OCI-LY7 (cell line): ENCODE measurements at regions of chr4 and their contacts with region 1.

Region 1: DNA sequence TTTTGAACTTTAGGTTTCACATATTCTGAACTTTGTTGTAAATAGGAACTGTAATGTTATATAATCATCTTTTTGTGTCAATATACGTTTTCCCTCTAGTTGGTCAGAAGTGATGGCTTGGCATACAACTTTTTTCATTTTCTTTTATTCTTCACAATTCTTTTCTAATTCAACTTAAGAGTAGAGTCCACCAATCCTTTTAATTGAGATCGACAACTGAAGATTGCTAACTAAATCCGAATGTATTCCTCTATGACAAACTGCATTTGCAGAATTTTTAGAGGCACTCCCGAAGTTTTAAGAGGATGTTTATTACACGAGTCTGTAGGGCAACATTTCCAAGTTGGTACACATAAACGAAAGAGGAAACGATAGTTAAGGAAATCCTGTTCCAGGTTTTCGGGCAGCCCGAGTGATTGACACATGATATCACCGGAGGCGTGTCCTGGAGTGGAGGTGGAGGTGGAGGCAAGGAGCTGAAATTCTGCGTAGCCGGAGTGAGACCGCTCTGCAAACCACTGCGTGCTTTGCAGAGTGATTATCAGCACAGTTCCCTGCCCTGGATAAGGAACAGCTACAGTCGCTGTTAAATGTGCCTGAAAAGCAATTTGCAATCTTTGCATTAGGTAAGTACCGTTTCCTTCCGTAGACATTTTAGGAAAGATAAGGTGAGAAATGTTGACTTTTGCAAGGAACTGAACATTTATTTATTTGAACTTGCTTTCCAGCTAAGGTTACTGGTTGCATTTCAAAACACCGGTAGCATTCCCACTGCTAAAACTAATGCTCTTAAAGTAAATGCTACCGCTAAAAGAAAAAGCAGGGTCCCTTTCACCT is at the start of gene SPRY1:
- DNase-seq: peak; percentile 76
- H3K4me3 ChIP-seq: peak within 1 kb of the TSS; percentile 74
- H3K27ac ChIP-seq: no peak within 1 kb of the TSS
- H3K4me1 ChIP-seq: peaks cover 36% of the 10 kb centered on the region
- CTCF ChIP-seq: no peak
- total RNA-seq, gene SPRY1: 0.79 and 1.5 TPM in 2 replicates

Region 2: GRCh38 chr4:123102897-123103471 is 293.5 kb before region 1 on chr4:
- CTCF ChIA-PET with region 1: no interaction called
- POLR2A ChIA-PET with region 1: interaction called, 3 read pairs
- intact Hi-C with region 1: loop called (anchors 5 kb)
- DNase-seq: peak; percentile 50
- H3K4me3 ChIP-seq: no peak overlapping the region
- H3K27ac ChIP-seq: no peak overlapping the region
- H3K4me1 ChIP-seq: no peaks in the 10 kb centered on the region
- CTCF ChIP-seq: peak; percentile 92

Region 3: DNA sequence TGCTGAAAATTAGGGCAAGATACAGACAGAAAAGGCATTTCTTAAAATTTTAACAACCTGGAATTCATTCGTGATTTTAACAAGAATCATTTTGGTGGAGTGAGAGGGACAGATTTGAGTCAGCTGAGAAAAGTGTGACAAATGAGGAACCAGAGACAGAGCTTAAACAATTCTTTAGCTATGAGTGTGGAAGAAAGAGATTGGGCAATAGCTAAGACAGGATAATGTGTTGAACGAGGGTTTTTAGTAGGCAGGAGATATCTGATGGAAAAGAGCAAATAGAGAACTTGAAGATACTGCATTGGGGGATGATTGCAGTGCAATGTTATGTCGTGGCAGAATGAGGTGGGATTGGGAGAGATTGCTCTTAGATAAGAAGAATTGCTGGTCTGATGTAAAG is 164.1 kb before region 1 on chr4:
- CTCF ChIA-PET with region 1: no interaction called
- POLR2A ChIA-PET with region 1: no interaction called
- intact Hi-C with region 1: no loop called
- DNase-seq: no peak
- H3K4me3 ChIP-seq: no peak overlapping the region
- H3K27ac ChIP-seq: no peak overlapping the region
- H3K4me1 ChIP-seq: no peaks in the 10 kb centered on the region
- CTCF ChIP-seq: no peak

Region 4: DNA sequence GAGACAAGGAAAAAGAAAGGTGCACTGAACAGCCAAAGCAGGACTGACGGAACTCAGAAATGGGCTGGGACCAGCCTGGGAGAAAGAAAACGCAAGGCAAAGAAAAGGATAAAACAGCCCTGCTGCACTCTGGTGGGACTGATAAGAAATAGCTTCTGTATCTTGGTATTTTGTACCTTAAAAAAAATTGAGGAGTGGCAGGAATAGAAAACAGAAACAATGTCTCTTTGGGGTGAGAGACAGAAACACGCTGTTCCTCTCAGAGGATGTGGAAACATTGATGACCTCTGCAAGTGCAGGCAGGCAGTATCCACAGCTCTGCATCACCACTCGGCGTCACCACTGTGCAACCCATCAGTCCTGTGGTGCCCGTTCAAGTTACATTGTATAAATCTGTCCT is 152.4 kb before region 1 on chr4:
- CTCF ChIA-PET with region 1: no interaction called
- POLR2A ChIA-PET with region 1: no interaction called
- intact Hi-C with region 1: loop called (anchors 10 kb)
- DNase-seq: peak; percentile 43
- H3K4me3 ChIP-seq: no peak overlapping the region
- H3K27ac ChIP-seq: no peak overlapping the region
- H3K4me1 ChIP-seq: peaks cover 28% of the 10 kb centered on the region
- CTCF ChIP-seq: peak; percentile 60

Region 5: DNA sequence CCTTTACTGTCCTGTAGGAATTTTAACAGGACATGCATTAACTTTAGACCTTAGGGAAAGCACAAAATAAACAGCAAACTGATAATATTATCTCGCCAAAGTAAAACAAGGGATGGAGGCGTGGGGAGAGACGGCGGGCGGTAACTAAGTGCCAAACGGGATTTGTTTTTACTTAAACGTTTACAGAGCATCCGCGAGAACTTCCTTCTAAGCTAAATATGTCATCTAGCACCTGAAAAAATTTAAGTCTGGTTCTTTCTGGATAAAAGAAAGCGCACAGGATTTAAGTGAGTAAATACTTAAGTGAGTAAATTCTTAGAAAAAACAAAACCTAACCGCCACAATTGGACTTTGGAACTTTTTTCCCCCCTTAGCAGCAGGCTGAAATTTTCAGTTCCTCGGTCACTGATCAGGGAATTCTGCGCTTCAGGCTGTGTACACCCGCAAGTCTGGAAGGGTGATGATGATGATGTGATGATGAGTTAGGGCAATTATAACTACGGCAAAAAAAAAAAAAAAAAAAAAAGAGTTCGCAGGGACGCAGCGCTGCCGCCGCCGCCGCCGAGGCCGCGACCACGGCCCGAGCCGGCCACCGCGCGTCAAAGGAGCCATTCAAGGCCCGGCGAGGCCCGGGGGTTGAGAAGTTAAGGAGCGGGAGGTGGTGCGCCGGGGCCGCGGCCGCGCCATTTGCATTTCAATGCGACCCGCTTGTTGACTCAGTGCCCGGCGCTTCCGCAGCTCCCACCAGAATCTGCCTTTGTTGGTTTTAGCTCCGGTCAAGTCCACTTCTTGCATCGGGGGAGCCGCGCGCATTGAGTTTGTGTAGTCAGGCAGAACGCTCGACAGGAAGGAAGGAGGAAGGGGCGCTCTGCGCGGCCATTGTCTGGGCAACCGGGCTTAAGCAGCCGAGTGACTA is 108.8 kb after region 1 on chr4:
- CTCF ChIA-PET with region 1: no interaction called
- POLR2A ChIA-PET with region 1: interaction called, 4 read pairs
- intact Hi-C with region 1: loop called (anchors 2 kb)
- DNase-seq: peak; percentile 95
- H3K4me3 ChIP-seq: peak overlapping the region; percentile 66
- H3K27ac ChIP-seq: peak overlapping the region; percentile 83
- H3K4me1 ChIP-seq: peaks cover 40% of the 10 kb centered on the region
- CTCF ChIP-seq: no peak

Region 6: DNA sequence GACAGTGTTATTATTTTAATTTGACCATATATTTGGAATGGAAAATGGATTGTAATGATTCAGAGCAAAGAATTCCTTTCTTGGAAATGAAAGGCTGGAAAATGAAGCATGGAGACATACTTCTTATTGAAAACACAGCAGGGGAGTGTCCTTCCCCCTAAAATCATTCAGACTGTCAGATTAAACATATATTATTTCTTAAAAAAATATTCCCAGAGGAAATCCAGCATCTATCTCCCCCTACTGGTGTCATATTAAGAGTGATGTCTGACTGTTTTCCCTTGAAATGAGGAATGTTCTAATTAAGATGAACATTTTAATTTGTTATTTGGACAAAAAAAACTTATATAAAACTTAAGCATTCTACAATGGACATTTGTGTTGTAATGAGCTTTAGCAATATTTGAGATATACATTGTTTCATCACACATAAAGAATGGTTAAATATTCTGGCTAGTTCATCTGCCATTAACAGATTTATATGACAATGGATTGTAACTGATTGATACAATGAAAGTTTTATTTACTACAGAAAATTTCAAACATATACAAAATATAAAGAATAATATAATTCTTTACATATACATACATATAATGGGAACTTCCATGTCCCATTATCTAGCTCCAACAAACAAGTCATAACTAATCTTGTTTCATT is 264.7 kb after region 1 on chr4:
- CTCF ChIA-PET with region 1: interaction called, 3 read pairs
- POLR2A ChIA-PET with region 1: no interaction called
- intact Hi-C with region 1: loop called (anchors 2 kb)
- DNase-seq: peak; percentile 34
- H3K4me3 ChIP-seq: no peak overlapping the region
- H3K27ac ChIP-seq: no peak overlapping the region
- H3K4me1 ChIP-seq: no peaks in the 10 kb centered on the region
- CTCF ChIP-seq: peak; percentile 85